ENCODE measurements at regions of chr20 and their contacts with region 1.

Region 1: GRCh38 chr20:3407771-3408637 is 535 bp upstream of the DNAAF9 start:
- DNase-seq: peak; percentile 63
- H3K4me3 Mint-ChIP-seq: peak overlapping the region; percentile 95
- H3K27ac Mint-ChIP-seq: peak overlapping the region; percentile 57
- H3K4me1 Mint-ChIP-seq: peaks cover 20% of the 10 kb centered on the region
- H3K27me3 Mint-ChIP-seq: peaks cover 4% of the 10 kb centered on the region

Region 2: DNA sequence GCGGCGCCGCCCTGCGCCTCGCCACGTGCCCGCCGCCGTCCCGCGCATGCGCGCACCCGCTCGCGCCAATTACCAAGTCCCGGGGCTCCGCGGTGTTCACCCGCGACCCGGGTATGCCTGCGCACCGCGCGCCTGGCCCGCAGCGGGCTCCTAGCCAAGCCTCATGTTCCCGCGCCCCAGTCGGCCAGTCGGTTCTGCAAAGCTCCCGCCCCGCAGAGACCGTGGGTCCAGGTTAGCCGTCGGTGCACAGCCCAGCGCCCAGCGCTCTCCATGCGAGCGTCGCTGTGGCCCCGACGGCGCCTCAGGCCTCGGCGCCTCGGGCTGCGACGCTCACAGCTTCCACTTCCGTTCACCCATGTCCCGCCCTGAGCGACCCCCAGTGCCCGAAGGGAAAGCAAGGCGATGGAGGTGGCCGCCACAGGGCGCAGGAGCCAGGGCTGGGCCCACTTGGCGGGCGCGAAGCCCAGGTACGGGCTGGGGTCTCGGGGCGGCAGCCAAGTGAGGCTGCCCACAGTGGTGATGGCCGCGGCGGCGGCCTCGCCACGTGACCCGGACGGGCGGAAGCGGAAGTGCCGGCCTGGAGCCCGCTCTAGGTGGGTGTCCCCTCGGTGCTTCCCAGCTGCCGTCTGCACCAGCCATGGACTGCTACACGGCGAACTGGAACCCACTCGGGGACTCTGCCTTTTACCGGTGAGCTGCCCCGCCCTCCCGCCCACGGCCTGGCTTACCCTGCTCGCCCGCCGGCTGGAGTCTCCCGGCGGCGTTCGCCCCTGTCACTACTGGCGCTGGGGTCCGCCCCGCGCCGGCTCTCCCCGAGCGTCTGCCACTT is 567.7 kb before region 1 on chr20 and contains the starts of genes PCED1A and VPS16:
- CTCF ChIA-PET with region 1: no interaction called
- intact Hi-C with region 1: loop called (anchors 5 kb)
- DNase-seq: peak; percentile 88
- H3K4me3 Mint-ChIP-seq: peak within 1 kb of the TSS; percentile 78
- H3K27ac Mint-ChIP-seq: peak within 1 kb of the TSS; percentile 73
- H3K4me1 Mint-ChIP-seq: peaks cover 37% of the 10 kb centered on the region
- H3K27me3 Mint-ChIP-seq: no peaks in the 10 kb centered on the region
- total RNA-seq, gene PCED1A: 44.6 to 44.8 TPM
- total RNA-seq, gene VPS16: 39.0 to 42.0 TPM

Region 3: GRCh38 chr20:3209257-3209945 is 198.6 kb before region 1 on chr20 and contains the start of gene ITPA:
- CTCF ChIA-PET with region 1: no interaction called
- intact Hi-C with region 1: loop called (anchors 1 kb)
- DNase-seq: peak; percentile 77
- H3K4me3 Mint-ChIP-seq: peak within 1 kb of the TSS; percentile 97
- H3K27ac Mint-ChIP-seq: peak within 1 kb of the TSS; percentile 90
- H3K4me1 Mint-ChIP-seq: peaks cover 26% of the 10 kb centered on the region
- H3K27me3 Mint-ChIP-seq: no peaks in the 10 kb centered on the region
- total RNA-seq, gene ITPA: 38.2 to 42.1 TPM

Region 4: DNA sequence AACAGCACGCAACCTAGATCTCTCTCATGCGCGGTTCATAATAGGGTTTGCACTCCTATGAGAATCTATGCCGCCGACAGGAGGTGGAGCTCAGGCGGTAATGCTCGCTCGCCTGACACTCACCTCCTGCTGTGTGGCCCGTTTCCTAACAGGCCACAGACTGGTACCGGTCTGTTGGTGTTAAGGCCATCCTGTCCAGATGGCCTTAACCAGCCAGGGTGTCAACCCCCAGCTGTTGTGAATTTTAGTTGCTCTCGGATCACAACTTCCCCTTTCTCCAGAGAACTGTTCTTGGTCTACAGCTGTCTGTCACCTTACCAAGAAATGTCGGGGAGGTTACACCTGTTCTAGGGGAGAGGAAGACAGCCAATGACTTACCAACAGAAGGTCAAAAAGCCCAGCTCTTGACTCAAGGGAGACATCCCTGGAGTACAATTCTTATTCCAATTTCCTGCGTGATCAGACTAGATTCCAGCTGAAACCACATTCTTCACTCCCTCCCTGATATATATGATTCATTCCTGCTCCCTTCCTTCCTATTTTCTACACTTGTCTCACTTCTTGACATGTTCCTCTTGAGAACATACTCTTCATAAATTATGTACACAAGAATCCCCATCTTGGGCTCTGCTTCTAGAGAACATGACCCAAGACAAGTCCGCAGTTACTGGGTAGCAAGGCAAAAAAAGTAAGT is 22.5 kb after region 1 on chr20:
- CTCF ChIA-PET with region 1: no interaction called
- intact Hi-C with region 1: no loop called
- DNase-seq: no peak
- H3K4me3 Mint-ChIP-seq: no peak overlapping the region
- H3K27ac Mint-ChIP-seq: no peak overlapping the region
- H3K4me1 Mint-ChIP-seq: no peaks in the 10 kb centered on the region
- H3K27me3 Mint-ChIP-seq: peaks cover 13% of the 10 kb centered on the region

Region 5: GRCh38 chr20:3470627-3471396 is 62.8 kb after region 1 on chr20 and contains the start of gene ATRN:
- CTCF ChIA-PET with region 1: interaction called, 5 read pairs
- intact Hi-C with region 1: loop called (anchors 2 kb)
- DNase-seq: peak; percentile 88
- H3K4me3 Mint-ChIP-seq: peak within 1 kb of the TSS; percentile 86
- H3K27ac Mint-ChIP-seq: no peak within 1 kb of the TSS
- H3K4me1 Mint-ChIP-seq: peaks cover 29% of the 10 kb centered on the region
- H3K27me3 Mint-ChIP-seq: no peaks in the 10 kb centered on the region
- total RNA-seq, gene ATRN: 5.1 TPM

Region 6: GRCh38 chr20:3686867-3687321 is 278.9 kb after region 1 on chr20:
- CTCF ChIA-PET with region 1: no interaction called
- intact Hi-C with region 1: no loop called
- DNase-seq: no peak
- H3K4me3 Mint-ChIP-seq: no peak overlapping the region
- H3K27ac Mint-ChIP-seq: no peak overlapping the region
- H3K4me1 Mint-ChIP-seq: no peaks in the 10 kb centered on the region
- H3K27me3 Mint-ChIP-seq: peaks cover 22% of the 10 kb centered on the region

Region 7: GRCh38 chr20:3980260-3981131 is 572.5 kb after region 1 on chr20:
- CTCF ChIA-PET with region 1: no interaction called
- intact Hi-C with region 1: loop called (anchors 10 kb)
- DNase-seq: peak; percentile 59
- H3K4me3 Mint-ChIP-seq: peak overlapping the region; percentile 62
- H3K27ac Mint-ChIP-seq: peak overlapping the region; percentile 83
- H3K4me1 Mint-ChIP-seq: peaks cover 20% of the 10 kb centered on the region
- H3K27me3 Mint-ChIP-seq: no peaks in the 10 kb centered on the region